Activated CD8-positive, alpha-beta T cell treated with anti-CD3 and anti-CD28 coated beads for 36 hours (primary cell): ENCODE measurements at regions of chr12 and their contacts with region 1.

Region 1: DNA sequence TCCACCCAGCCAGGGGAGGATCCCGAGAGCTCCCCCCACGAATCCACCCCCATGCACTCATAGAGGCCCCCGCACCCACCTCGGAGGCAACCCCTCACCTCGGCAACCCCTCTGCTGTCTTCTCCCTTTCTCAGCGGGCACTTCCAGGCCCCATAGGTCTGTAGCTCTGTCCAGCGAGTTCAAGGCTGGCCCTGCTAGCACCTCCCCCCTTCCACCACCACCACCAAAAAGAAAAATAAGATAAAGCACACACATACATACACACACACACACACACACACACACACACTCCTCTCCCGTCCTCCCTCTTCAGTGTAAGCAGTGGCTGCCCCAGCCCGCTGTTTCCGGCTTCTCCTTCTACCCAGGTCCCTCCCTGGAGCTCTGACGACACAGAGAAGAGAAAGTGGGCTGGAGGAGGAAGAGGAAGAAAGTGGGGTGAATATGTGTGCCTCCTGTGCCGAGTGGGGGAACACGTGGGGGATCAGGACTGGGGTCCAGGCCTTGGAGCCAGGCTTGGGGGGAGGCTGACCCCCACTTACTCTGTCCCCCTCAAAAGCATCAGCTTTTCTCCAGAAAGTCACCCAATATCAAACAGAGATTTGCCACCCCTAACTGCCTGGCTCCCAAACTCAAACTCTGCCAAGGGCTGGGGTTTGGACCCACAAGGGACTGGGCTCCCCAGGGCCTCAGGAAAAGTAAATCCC is at the start of gene STAT6:
- DNase-seq: peak; percentile 91
- ATAC-seq: peak; percentile 57
- H3K4me3 Mint-ChIP-seq: peak within 1 kb of the TSS; percentile 98
- H3K27ac Mint-ChIP-seq: peak within 1 kb of the TSS; percentile 99
- H3K4me1 Mint-ChIP-seq: peaks cover 48% of the 10 kb centered on the region
- H3K27me3 Mint-ChIP-seq: no peaks in the 10 kb centered on the region
- CTCF ChIP-seq: no peak
- total RNA-seq, gene STAT6: 207 to 209 TPM

Region 2: GRCh38 chr12:56695327-56696101 is 415.7 kb before region 1 on chr12:
- CTCF ChIA-PET with region 1: no interaction called
- POLR2A ChIA-PET with region 1: no interaction called
- intact Hi-C with region 1: no loop called
- DNase-seq: no peak
- ATAC-seq: no peak
- H3K4me3 Mint-ChIP-seq: no peak overlapping the region
- H3K27ac Mint-ChIP-seq: no peak overlapping the region
- H3K4me1 Mint-ChIP-seq: peaks cover 2% of the 10 kb centered on the region
- H3K27me3 Mint-ChIP-seq: no peaks in the 10 kb centered on the region
- CTCF ChIP-seq: no peak

Region 3: DNA sequence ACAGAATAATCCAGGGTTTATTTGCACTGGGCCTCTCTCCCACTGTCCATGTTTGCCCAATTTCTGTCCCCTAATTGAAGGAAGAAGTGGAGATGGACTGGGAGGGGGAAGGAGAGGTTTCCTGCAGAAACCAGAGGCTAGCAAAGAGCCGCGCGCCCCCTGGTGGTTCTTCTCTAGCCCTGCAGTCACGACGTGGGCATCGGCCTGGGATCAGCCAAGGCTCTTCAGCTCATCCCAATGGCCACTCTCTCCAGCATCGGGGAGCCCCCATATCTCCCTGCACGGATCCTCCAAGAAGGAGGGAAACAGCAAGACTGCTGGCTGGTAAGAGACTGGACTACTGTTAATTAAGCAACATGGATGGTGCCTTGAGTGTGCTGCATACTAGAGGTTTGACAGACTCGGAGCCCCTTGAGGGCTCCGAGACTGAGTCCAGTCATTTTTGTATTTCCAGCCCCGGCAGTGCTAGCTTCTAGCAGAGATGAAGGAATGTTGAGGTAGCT is 123.6 kb before region 1 on chr12:
- CTCF ChIA-PET with region 1: interaction called, 14 read pairs
- POLR2A ChIA-PET with region 1: no interaction called
- intact Hi-C with region 1: no loop called
- DNase-seq: peak; percentile 81
- ATAC-seq: peak; percentile 77
- H3K4me3 Mint-ChIP-seq: no peak overlapping the region
- H3K27ac Mint-ChIP-seq: no peak overlapping the region
- H3K4me1 Mint-ChIP-seq: peaks cover 12% of the 10 kb centered on the region
- H3K27me3 Mint-ChIP-seq: peaks cover 1% of the 10 kb centered on the region
- CTCF ChIP-seq: peak; percentile 97

Region 4: DNA sequence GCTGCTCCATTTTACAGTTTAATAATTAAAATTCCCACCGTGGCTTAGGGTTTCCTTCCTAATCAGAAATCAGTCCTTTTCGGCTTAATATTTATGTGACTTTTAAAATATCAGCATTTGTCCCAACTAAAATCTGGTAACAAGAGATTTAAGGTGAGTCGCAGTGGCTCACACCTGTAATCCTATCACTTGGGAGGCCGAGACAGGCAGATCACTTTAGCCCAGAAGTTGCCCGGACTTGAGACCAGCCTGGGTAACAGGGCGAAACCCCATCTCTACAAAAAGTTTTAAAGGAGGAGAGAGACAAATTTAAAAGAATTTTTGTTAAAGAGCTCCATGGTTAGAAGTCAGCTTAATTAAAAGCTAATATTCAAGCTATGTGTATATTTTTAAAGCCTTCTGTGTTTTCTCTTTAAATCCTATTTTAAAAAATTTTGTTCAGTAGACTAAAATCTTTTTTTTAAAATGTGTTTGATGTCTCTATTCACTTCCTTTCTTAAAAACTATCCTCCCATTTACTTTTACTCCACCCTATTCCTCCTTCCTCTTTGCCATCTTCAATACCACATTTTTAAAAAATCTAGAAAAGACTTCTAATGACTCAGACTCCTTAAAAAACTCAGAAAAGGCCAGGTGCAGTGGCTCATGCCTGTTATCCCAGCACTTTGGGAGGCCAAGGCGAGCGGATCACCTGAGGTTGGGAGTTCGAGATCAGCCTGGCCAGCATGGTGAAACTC is 91.0 kb before region 1 on chr12:
- CTCF ChIA-PET with region 1: interaction called, 13 read pairs
- POLR2A ChIA-PET with region 1: interaction called, 3 read pairs
- intact Hi-C with region 1: no loop called
- DNase-seq: no peak
- ATAC-seq: no peak
- H3K4me3 Mint-ChIP-seq: no peak overlapping the region
- H3K27ac Mint-ChIP-seq: peak overlapping the region; percentile 20
- H3K4me1 Mint-ChIP-seq: peaks cover 8% of the 10 kb centered on the region
- H3K27me3 Mint-ChIP-seq: no peaks in the 10 kb centered on the region
- CTCF ChIP-seq: no peak

Region 5: GRCh38 chr12:57069523-57069922 is 41.7 kb before region 1 on chr12:
- CTCF ChIA-PET with region 1: interaction called, 147 read pairs
- POLR2A ChIA-PET with region 1: interaction called, 58 read pairs
- intact Hi-C with region 1: loop called (anchors 2 kb)
- DNase-seq: peak; percentile 79
- ATAC-seq: peak; percentile 90
- H3K4me3 Mint-ChIP-seq: peak overlapping the region; percentile 62
- H3K27ac Mint-ChIP-seq: peak overlapping the region; percentile 90
- H3K4me1 Mint-ChIP-seq: peaks cover 71% of the 10 kb centered on the region
- H3K27me3 Mint-ChIP-seq: no peaks in the 10 kb centered on the region
- CTCF ChIP-seq: peak; percentile 86

Region 6: GRCh38 chr12:57124259-57124877 is 13.2 kb after region 1 on chr12:
- CTCF ChIA-PET with region 1: interaction called, 58 read pairs
- POLR2A ChIA-PET with region 1: interaction called, 24 read pairs
- intact Hi-C with region 1: no loop called
- DNase-seq: peak; percentile 89
- ATAC-seq: peak; percentile 75
- H3K4me3 Mint-ChIP-seq: no peak overlapping the region
- H3K27ac Mint-ChIP-seq: no peak overlapping the region
- H3K4me1 Mint-ChIP-seq: peaks cover 5% of the 10 kb centered on the region
- H3K27me3 Mint-ChIP-seq: no peaks in the 10 kb centered on the region
- CTCF ChIP-seq: peak; percentile 91